ENCODE measurements at regions of chr10 and their contacts with region 1.

Region 1: DNA sequence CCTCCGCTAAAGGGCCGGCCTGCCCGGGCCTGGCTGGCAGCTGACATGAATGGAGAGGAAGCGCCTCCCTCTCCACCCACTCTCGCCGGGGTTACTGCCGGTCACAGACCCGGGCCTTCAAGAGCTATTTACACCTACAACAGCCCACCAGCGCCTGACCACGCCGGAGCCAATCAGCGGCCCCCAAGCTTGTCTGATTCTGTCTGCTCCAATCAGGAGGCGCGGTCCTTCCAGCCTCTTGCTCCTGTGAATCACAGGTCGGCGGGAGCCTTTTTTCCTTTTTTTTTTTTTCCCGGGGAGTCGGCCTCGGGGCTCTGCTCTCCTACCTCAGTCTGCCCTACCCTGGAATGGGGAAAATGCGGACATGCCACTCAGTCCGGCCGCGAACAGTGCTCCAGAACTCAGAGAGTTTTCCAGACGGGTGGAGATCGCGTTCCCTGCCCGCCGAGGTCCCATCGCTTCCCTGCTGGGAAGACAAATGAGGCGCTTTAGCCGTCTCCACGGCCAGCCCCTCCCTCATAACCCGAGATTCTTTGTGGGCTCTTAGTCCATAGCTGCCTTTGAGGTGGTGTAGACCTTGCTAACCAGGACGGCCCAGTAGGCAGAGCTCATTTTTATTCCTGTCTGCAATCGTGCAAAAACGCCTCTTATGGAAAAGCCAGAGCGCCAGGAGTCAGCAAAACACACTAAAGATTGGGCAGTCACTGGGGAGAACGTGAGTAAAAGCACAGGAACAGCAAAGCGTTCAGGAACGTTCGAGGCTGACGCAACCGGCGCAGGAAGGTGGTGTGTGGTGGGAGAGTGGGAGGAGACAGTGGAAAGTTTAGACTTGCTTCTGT is 26.5 kb downstream of the SCD start:
- DNase-seq: peak; percentile 96
- H3K4me3 Mint-ChIP-seq: no peak overlapping the region
- H3K27ac Mint-ChIP-seq: no peak overlapping the region
- H3K4me1 Mint-ChIP-seq: peaks cover 39% of the 10 kb centered on the region
- H3K27me3 Mint-ChIP-seq: no peaks in the 10 kb centered on the region

Region 2: GRCh38 chr10:100391163-100392002 is 17.9 kb after region 1 on chr10:
- CTCF ChIA-PET with region 1: interaction called, 5 read pairs
- POLR2A ChIA-PET with region 1: interaction called, 10 read pairs
- DNase-seq: no peak
- H3K4me3 Mint-ChIP-seq: no peak overlapping the region
- H3K27ac Mint-ChIP-seq: no peak overlapping the region
- H3K4me1 Mint-ChIP-seq: peaks cover 18% of the 10 kb centered on the region
- H3K27me3 Mint-ChIP-seq: no peaks in the 10 kb centered on the region